Activated naive CD4-positive, alpha-beta T cell treated with anti-CD3 and anti-CD28 coated beads, Interleukin-2, amount 10 ng/mL, durations not matched to agents 7 days and 5 days (primary cell): ENCODE measurements at regions of chr19 and their contacts with region 1.

Region 1: DNA sequence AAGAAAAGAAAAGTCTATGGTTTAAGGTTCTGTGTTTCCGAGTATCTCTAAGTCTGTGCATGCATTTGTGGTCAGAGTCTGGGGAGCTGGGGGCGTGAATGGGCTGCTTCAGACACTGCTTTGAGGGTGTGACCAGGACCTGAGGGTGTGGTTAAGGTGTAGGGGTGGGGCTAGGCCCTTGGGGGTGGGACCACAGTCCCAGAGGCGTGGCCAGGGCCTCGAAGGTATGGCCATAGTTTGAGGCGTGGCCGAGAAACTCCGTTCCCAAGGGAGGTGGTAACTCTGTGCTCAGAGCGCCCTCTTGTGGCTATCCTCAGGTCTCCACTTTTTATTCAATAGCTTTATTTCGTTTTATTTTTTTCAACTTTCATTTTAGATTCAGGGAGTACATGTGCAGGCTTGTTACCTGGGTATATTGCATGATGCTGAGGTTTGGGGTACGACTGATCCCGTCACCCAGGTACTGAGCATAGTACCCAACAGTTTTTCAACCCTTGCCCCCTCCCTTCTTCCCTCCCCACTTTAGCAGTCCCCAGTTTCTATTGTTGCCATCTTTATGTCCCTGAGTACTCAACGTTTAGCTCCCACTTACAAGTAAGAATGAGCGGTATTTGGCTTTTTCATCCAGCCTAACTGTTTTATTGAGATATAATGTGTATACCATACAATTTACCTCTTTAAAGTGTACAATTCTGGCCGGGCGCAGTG is 7.0 kb upstream of the CBLC start:
- DNase-seq: peak; percentile 98
- H3K4me3 Mint-ChIP-seq: peak overlapping the region; percentile 8
- H3K27ac Mint-ChIP-seq: peak overlapping the region; percentile 54
- H3K4me1 Mint-ChIP-seq: peaks cover 38% of the 10 kb centered on the region
- H3K27me3 Mint-ChIP-seq: peaks cover 10% of the 10 kb centered on the region

Region 2: DNA sequence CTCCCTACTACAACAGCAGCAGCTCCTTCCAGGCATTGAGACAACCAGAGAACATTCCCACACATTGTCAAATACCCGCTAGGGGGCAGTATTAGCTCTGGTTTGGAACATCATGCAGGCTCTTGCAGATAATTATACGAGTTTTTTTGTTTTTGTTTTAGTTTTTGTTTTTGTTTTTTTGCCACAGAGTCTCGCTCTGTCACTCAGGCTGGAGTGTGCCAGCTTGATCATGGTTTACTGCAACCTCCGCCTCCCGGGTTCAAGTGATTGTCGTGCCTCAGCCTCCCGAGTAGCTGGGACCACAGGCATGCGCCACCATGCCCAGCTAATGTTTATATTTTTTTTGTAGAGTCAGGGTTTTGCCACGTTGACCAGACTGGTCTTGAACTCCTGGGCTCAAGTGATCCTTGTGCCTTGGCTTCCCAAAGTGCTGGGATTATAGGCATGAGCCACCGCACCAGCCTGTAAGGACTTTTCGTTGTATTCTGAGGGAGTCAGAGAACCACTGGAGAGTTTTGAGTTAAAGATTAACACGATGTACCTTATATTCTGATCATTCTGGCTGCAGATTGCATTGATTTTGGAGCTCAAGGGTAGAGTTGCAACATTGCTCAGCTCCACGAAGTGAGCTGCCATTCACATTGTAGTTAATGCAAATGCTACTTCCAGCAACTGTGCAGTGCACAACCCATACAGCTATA is 199.6 kb before region 1 on chr19:
- CTCF ChIA-PET with region 1: interaction called, 11 read pairs
- DNase-seq: peak; percentile 70
- H3K4me3 Mint-ChIP-seq: no peak overlapping the region
- H3K27ac Mint-ChIP-seq: no peak overlapping the region
- H3K4me1 Mint-ChIP-seq: no peaks in the 10 kb centered on the region
- H3K27me3 Mint-ChIP-seq: no peaks in the 10 kb centered on the region

Region 3: DNA sequence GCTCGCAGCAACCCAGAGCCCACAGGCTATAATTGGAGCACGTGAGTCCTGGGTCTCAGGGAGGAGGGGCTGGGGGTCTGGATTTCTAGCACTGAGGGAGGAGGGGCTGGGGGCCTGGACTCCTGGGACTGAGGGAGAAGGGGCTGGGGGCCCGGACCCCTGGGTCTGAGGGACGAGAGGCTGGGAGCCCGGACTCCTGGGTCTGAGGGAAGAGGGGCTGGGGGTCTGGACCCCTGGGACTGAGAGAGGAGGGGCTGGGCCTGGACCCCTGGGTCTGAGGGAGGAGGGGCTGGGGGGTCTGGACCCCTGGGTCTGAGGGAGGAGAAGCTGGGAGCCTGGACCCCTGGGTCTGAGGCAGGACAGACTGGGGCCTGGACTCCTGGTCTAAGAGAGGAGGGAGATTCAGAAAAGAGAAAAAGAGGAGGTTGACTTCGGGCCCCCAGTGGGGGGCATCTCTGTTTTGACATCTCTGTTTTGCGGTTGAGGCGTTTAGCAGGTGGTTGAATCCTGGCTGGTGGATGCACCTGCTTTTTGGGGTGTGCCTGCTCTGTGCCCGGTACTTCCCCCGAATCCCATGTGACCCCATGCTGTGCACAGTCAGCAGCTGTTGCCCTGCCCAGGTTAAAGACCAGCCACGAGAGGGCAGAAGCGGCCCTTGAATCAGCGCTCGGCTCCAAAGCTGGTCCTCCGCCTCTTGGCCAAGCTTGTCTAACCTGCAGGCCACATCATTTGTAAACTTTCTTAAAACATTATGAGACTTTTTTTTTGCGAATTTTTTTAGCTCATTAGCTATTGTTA is 116.5 kb before region 1 on chr19:
- CTCF ChIA-PET with region 1: interaction called, 13 read pairs
- DNase-seq: peak; percentile 85
- H3K4me3 Mint-ChIP-seq: no peak overlapping the region
- H3K27ac Mint-ChIP-seq: no peak overlapping the region
- H3K4me1 Mint-ChIP-seq: peaks cover 6% of the 10 kb centered on the region
- H3K27me3 Mint-ChIP-seq: no peaks in the 10 kb centered on the region

Region 4: GRCh38 chr19:44689056-44689895 is 81.4 kb before region 1 on chr19:
- CTCF ChIA-PET with region 1: interaction called, 79 read pairs
- DNase-seq: peak; percentile 87
- H3K4me3 Mint-ChIP-seq: no peak overlapping the region
- H3K27ac Mint-ChIP-seq: no peak overlapping the region
- H3K4me1 Mint-ChIP-seq: peaks cover 40% of the 10 kb centered on the region
- H3K27me3 Mint-ChIP-seq: peaks cover 46% of the 10 kb centered on the region

Region 5: DNA sequence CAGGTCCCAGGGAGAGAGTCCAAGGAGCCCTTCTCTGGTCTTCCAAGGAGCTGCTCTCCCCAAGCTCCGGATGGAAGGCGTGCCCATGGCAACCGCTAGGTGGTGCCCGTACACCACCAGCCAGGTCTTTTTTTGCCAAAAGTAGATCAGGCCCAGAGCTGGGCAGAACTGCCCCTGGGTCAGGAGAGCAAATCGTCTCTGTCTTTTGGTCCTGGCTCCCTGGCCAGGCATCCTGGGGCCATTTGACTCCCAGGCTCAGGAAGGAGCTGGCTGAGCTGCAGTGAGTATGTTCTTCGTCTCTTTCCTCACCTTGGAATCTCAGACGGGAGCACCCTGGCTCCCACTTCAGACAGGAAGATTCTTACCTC is 46.8 kb before region 1 on chr19:
- CTCF ChIA-PET with region 1: interaction called, 385 read pairs
- DNase-seq: peak; percentile 86
- H3K4me3 Mint-ChIP-seq: no peak overlapping the region
- H3K27ac Mint-ChIP-seq: peak overlapping the region; percentile 21
- H3K4me1 Mint-ChIP-seq: peaks cover 56% of the 10 kb centered on the region
- H3K27me3 Mint-ChIP-seq: peaks cover 35% of the 10 kb centered on the region

Region 6: DNA sequence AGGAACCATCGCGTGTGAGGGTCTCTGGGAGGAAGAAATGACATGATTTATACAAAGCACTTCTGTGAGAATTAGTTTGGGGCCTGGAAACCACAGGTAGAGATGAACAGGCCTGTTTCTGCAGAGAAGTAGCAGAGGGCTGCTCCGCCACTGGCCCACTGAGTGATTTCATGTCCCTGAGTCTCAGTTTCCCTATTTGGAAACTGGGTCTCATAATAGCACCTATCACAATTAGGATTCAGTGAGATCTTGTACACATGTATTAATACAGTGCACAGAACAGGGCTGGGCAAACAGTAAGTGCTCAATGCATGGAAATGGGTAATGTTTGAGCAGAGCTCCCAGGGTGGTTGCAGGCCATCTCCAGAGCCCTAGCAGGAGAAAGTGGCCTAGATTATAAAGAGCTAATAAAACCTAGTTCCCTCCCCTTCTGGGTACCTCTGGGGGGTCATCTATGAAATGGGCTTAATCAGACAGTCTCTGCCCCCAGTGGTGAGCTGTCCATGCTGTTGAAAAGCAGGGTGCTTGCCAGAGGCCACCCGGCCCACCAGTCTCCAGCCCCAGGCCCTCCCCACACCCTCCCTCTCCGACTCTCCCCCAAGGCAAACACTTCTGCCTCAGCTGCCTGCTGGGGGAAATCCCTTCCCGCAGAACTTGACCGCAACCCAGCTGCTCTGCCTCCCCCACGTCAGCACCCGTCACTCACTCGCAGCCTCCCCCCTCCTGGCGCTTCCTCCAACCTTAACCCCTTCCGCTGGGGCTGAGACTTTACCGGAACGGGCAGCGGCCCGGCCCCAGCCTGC is 17.7 kb before region 1 on chr19:
- CTCF ChIA-PET with region 1: interaction called, 16 read pairs
- DNase-seq: peak; percentile 98
- H3K4me3 Mint-ChIP-seq: peak overlapping the region; percentile 91
- H3K27ac Mint-ChIP-seq: peak overlapping the region; percentile 97
- H3K4me1 Mint-ChIP-seq: peaks cover 79% of the 10 kb centered on the region
- H3K27me3 Mint-ChIP-seq: peaks cover 4% of the 10 kb centered on the region

Region 7: DNA sequence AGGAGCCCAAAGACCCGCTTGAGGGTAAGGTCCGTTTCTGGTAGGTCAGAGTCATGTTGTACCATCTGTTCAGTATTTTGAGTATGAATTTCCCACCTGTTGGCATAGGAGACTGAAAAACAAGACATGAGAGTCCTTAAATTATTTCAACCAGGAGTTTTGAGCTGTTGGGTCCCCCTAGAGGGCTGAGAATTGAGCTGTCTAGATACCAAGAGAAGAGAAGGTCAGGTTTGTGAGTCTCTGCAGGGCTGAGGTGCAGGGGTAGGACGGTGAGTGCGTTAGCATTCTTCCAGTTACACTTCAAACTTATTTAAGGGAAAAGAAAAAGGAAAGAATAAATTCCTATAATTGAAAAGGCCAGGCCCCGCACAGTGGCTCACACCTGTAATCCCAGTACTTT is 12.0 kb after region 1 on chr19:
- CTCF ChIA-PET with region 1: interaction called, 26 read pairs
- DNase-seq: no peak
- H3K4me3 Mint-ChIP-seq: no peak overlapping the region
- H3K27ac Mint-ChIP-seq: no peak overlapping the region
- H3K4me1 Mint-ChIP-seq: peaks cover 4% of the 10 kb centered on the region
- H3K27me3 Mint-ChIP-seq: peaks cover 19% of the 10 kb centered on the region

Region 8: DNA sequence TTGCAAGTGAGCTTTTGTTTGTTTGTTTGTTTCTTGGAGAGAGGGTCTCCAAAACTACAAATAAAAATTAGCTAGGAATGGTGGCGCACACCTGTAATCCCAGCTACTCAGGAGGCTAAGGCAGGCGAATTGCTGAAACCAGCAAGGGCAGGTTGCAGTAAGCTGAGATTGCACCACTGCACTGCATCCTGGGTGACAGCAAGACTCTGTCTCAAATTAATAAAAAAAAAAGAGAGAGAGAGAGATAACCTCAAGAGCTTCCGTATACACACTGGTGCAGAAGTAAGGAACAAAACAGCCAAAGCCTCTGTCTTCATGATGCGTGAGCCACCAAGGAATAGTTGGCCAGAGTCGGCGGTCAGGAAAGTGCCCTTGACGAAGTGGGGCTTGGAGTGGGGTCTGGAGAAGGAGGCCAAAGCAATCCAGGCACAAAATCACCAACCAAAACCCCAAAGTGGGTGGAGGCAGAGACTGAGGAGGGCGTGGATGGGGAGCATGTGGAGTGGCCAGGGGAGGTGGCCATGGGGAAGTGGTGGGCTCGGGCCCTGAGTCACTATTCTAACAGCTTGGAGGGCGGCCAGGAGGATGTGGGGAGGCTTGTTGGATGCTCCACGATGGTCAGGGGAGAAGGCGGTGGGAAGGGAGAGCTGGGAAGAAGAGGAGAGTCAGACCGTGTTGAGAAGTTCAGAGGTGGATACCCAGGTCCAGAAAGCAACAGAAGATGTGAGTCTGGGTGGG is 99.2 kb after region 1 on chr19:
- CTCF ChIA-PET with region 1: no interaction called
- DNase-seq: no peak
- H3K4me3 Mint-ChIP-seq: no peak overlapping the region
- H3K27ac Mint-ChIP-seq: no peak overlapping the region
- H3K4me1 Mint-ChIP-seq: peaks cover 5% of the 10 kb centered on the region
- H3K27me3 Mint-ChIP-seq: peaks cover 14% of the 10 kb centered on the region